ENCODE measurements at regions of chr9 and their contacts with region 1.

Region 1: DNA sequence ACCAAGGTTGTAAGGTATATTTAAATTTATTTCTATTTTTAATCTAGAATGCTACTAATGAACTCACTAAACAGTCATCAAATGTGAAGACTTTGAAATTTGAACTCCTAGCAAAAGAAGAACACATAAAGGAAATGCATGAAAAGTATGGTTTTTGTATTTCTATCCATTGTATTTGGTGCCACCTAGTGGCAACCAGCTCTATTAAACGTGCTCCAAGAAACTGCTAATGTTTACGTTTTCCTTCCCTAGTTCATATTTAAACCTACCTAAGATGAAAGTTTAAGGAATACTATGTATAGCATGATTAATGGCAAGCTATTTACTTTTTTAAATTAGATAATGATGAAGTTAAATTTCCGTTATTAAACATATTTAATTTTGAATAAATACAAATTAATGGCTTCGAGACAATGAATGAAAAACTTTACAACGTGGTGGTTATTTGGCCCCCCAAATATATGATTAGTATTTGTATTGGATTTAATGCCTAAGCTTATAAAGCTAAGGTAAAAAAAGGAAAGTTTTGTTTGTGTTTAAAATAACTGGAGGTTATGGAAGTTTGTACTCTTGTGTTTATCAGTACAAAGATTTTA is 115.9 kb upstream of the SH3GL2 start:
- DNase-seq: peak; percentile 12 to 52 (median 26)
- H3K4me3 ChIP-seq: no peak overlapping the region
- H3K4me3 Mint-ChIP-seq: no peak overlapping the region
- H3K27ac ChIP-seq: no peak overlapping the region
- H3K27ac Mint-ChIP-seq: no peak overlapping the region
- H3K4me1 ChIP-seq: no peaks in the 10 kb centered on the region
- H3K4me1 Mint-ChIP-seq: no peaks in the 10 kb centered on the region
- H3K27me3 ChIP-seq: no peaks in the 10 kb centered on the region
- H3K27me3 Mint-ChIP-seq: no peaks in the 10 kb centered on the region
- CTCF ChIP-seq: peak; percentile 87

Region 2: GRCh38 chr9:16191691-16192402 is 1271.1 kb before region 1 on chr9:
- intact Hi-C with region 1: loop called in 1 of 2 experiments (anchors 5 kb)
- DNase-seq: peak in 1 of 3 donors; percentile 14
- H3K4me3 ChIP-seq: no peak overlapping the region
- H3K4me3 Mint-ChIP-seq: no peak overlapping the region
- H3K27ac ChIP-seq: no peak overlapping the region
- H3K27ac Mint-ChIP-seq: no peak overlapping the region
- H3K4me1 ChIP-seq: no peaks in the 10 kb centered on the region
- H3K4me1 Mint-ChIP-seq: peaks cover 2% of the 10 kb centered on the region
- H3K27me3 ChIP-seq: no peaks in the 10 kb centered on the region
- H3K27me3 Mint-ChIP-seq: peaks cover 2 to 5% (median 2%) of the 10 kb centered on the region in 3 donors
- CTCF ChIP-seq: peak; percentile 45

Region 3: DNA sequence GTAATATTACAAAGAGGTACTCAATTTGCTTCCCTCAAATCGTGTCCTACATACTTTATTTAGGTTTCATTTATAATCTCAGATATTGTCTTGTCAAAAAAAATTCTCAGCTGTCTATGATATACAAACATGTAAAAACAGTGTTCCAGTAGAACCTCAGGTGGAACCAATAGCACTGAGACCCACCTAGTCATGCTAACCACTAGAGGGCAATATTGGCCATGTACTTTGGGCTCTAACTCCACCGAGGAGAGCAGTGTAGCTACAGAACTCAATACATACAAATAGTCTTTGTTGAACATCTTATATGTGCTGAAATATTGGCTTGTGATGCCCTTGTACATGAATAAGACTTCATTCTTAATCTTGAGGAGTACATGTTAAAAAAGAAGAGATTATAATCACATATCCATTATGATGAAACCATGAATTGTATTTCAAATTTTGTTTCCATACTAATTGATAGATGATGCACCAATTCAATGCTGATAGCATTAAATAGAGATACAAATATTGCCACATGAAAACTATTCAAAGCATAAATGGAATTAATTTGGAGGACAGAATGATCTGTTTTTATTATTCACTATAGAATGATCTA is 399.3 kb before region 1 on chr9:
- intact Hi-C with region 1: loop called in 1 of 2 experiments (anchors 10 kb)
- DNase-seq: peak; percentile 1 to 12 (median 3)
- H3K4me3 ChIP-seq: no peak overlapping the region
- H3K4me3 Mint-ChIP-seq: no peak overlapping the region
- H3K27ac ChIP-seq: no peak overlapping the region
- H3K27ac Mint-ChIP-seq: no peak overlapping the region
- H3K4me1 ChIP-seq: no peaks in the 10 kb centered on the region
- H3K4me1 Mint-ChIP-seq: no peaks in the 10 kb centered on the region
- H3K27me3 ChIP-seq: no peaks in the 10 kb centered on the region
- H3K27me3 Mint-ChIP-seq: peaks cover 0 to 2% (median 2%) of the 10 kb centered on the region in 3 donors
- CTCF ChIP-seq: peak; percentile 78

Region 4: DNA sequence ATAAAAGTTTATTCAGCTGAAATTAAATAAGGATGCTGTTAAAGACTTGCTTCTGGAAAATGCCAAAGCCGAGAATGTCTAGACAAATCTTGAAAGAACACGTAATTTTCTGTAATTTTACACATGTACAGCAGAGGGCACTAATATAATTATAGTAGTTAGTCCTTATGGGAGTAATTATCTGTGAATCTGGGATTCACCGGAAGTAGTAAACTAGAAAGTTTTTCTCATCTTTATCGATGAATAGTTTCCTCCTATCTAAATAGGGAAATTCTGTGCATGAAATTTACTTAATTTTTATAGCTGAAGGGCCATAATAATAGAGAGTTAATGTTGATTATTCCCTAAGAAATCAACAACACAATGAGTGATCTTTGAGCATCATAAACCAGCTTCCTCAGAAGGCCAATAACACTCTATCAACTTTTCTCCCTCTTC is 346.5 kb before region 1 on chr9:
- intact Hi-C with region 1: loop called (anchors 5 to 10 kb)
- DNase-seq: peak in 2 of 3 donors; percentile 15 to 44
- H3K4me3 ChIP-seq: no peak overlapping the region
- H3K4me3 Mint-ChIP-seq: no peak overlapping the region
- H3K27ac ChIP-seq: no peak overlapping the region
- H3K27ac Mint-ChIP-seq: no peak overlapping the region
- H3K4me1 ChIP-seq: no peaks in the 10 kb centered on the region
- H3K4me1 Mint-ChIP-seq: no peaks in the 10 kb centered on the region
- H3K27me3 ChIP-seq: no peaks in the 10 kb centered on the region
- H3K27me3 Mint-ChIP-seq: peaks cover 0 to 5% (median 0%) of the 10 kb centered on the region in 3 donors
- CTCF ChIP-seq: peak; percentile 80